ENCODE measurements at regions of chr2 and their contacts with region 1.

Region 1: GRCh38 chr2:11477994-11478393 is 12.0 kb upstream of the E2F6 start:
- DNase-seq: peak; percentile 94

Region 2: GRCh38 chr2:11446733-11447248 is 31.2 kb before region 1 on chr2:
- intact Hi-C with region 1: no loop called
- DNase-seq: no peak

Region 3: DNA sequence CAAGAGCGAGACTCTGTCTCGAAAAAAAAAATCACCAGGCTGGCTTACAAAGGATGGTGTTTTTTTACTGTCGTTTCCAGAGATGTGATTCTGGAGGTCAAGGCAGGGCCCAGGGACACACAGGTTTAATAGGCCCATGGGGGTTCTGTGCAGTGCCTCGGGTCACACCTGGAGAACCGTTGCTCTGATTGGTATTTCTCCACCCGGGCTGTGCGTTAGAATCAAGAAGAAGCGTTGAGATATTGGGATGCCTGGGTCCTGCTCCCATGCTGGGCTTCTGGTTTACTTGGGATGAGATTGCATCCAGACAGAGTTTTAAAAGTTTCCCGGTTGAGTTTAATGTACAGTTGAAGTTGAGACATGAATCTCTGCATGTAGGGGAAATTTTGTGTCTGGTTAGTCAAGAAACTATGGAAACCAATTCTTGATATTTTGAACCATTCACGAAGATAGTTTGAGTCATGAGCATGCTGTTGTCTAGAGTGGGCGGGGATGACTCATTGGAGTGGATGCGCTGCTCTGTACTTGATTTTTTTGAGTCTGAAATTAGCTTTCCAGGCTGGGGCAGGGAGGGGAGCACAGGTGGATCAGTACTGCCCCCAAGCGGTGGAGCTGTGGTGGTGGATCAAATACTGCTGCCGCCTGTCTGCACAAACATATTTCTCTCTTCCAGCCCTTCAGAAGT is 106.0 kb after region 1 on chr2:
- intact Hi-C with region 1: loop called in 1 of 2 experiments (anchors 1 kb)
- DNase-seq: peak; percentile 90

Region 4: GRCh38 chr2:12903272-12903671 is 1425.3 kb after region 1 on chr2:
- intact Hi-C with region 1: loop called in 1 of 2 experiments (anchors 5 kb)
- DNase-seq: no peak

Measured in posterior vena cava (tissue), 2 donors.